WTC11 (cell line): ENCODE measurements at regions of chr10 and their contacts with region 1.

Region 1: DNA sequence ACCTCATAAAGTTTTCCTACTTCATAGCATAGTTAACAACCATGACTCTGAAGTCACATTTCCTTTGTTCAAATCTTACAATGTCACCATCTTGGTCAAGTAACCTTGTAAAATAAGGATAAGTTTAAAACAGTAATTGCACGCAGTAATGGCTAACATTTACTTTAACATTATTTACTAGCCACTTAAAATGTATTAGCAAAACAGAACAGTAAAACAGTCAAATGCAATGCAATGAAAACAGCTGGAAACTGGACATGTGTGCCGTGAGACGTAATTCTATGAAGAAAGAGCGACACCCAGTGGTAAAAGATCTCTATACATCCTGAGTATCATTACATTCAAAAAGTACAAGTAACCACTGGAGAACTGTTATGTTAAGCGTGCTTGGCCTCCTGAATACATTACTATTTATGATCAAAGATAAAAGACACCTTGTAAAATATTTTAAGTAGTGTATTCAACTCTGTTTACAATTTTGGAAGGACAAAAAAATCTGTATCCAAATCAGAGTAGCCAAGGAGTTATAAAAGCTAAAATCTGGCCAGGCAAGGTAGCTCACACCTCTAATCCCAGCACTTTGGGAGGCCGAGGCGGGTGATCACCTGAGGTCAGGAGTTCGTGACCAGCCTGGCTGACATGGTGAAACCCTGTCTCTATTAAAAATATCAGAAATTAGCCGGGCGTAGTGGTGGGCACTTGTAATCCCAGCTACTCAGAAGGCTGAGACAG is 27.2 kb downstream of the ATE1 start:
- DNase-seq: no peak
- ATAC-seq: peak; percentile 86
- H3K4me3 Mint-ChIP-seq: no peak overlapping the region
- H3K27ac Mint-ChIP-seq: peak overlapping the region; percentile 52; the same call in 1 of the 2 replicates
- H3K4me1 Mint-ChIP-seq: peaks cover 12% of the 10 kb centered on the region
- H3K27me3 Mint-ChIP-seq: no peaks in the 10 kb centered on the region
- CTCF ChIP-seq: peak; percentile 45

Region 2: GRCh38 chr10:121771966-121772365 is 128.6 kb before region 1 on chr10:
- CTCF ChIA-PET with region 1: no interaction called
- POLR2A ChIA-PET with region 1: no interaction called
- DNase-seq: no peak
- ATAC-seq: no peak
- H3K4me3 Mint-ChIP-seq: no peak overlapping the region
- H3K27ac Mint-ChIP-seq: peak overlapping the region; percentile 43; the same call in 1 of the 2 replicates
- H3K4me1 Mint-ChIP-seq: peaks cover 24% of the 10 kb centered on the region
- H3K27me3 Mint-ChIP-seq: no peaks in the 10 kb centered on the region
- CTCF ChIP-seq: no peak

Region 3: GRCh38 chr10:121823993-121824463 is 76.6 kb before region 1 on chr10:
- CTCF ChIA-PET with region 1: interaction called, 13 read pairs
- POLR2A ChIA-PET with region 1: no interaction called
- DNase-seq: no peak
- ATAC-seq: peak; percentile 56
- H3K4me3 Mint-ChIP-seq: no peak overlapping the region
- H3K27ac Mint-ChIP-seq: peak overlapping the region; percentile 72; the same call in 1 of the 2 replicates
- H3K4me1 Mint-ChIP-seq: peaks cover 5% of the 10 kb centered on the region; the same call in 1 of the 2 replicates
- H3K27me3 Mint-ChIP-seq: no peaks in the 10 kb centered on the region
- CTCF ChIP-seq: peak; percentile 48

Region 4: GRCh38 chr10:121886997-121887622 is 13.5 kb before region 1 on chr10:
- CTCF ChIA-PET with region 1: interaction called, 19 read pairs
- POLR2A ChIA-PET with region 1: interaction called, 8 read pairs
- DNase-seq: peak; percentile 74
- ATAC-seq: peak; percentile 59
- H3K4me3 Mint-ChIP-seq: no peak overlapping the region
- H3K27ac Mint-ChIP-seq: no peak overlapping the region
- H3K4me1 Mint-ChIP-seq: peaks cover 35% of the 10 kb centered on the region
- H3K27me3 Mint-ChIP-seq: no peaks in the 10 kb centered on the region
- CTCF ChIP-seq: peak; percentile 64; the same call in 1 of the 2 replicates

Region 5: GRCh38 chr10:122010405-122011050 is 109.9 kb after region 1 on chr10:
- CTCF ChIA-PET with region 1: no interaction called
- POLR2A ChIA-PET with region 1: no interaction called
- DNase-seq: no peak
- ATAC-seq: no peak
- H3K4me3 Mint-ChIP-seq: no peak overlapping the region
- H3K27ac Mint-ChIP-seq: no peak overlapping the region
- H3K4me1 Mint-ChIP-seq: no peaks in the 10 kb centered on the region
- H3K27me3 Mint-ChIP-seq: no peaks in the 10 kb centered on the region
- CTCF ChIP-seq: no peak